ENCODE measurements at regions of chr12 and their contacts with region 1.

Region 1: GRCh38 chr12:75511116-75512048 is at the start of gene KRR1:
- DNase-seq: peak; percentile 99
- H3K4me3 ChIP-seq: peak within 1 kb of the TSS; percentile 91 to 98 (median 93)
- H3K27ac ChIP-seq: peak within 1 kb of the TSS; percentile 91
- H3K4me1 ChIP-seq: peaks cover 12% of the 10 kb centered on the region
- H3K27me3 ChIP-seq: no peaks in the 10 kb centered on the region
- CTCF ChIP-seq: no peak
- POLR2A ChIP-seq: peak; percentile 66
- total RNA-seq, gene KRR1: 49.3 and 53.4 TPM in 2 replicates

Region 2: GRCh38 chr12:75489613-75490210 is 21.7 kb before region 1 on chr12:
- CTCF ChIA-PET with region 1: interaction called, 4 read pairs
- POLR2A ChIA-PET with region 1: no interaction called
- dilution Hi-C with region 1: no loop called
- intact Hi-C with region 1: loop called (anchors 2 kb)
- DNase-seq: peak; percentile 52
- H3K4me3 ChIP-seq: no peak overlapping the region
- H3K27ac ChIP-seq: peak overlapping the region; percentile 28
- H3K4me1 ChIP-seq: peaks cover 14% of the 10 kb centered on the region
- H3K27me3 ChIP-seq: no peaks in the 10 kb centered on the region
- CTCF ChIP-seq: no peak
- POLR2A ChIP-seq: no peak

Measured in endothelial cell of umbilical vein (primary cell).